ENCODE measurements at regions of chr13 and their contacts with region 1.

Region 1: GRCh38 chr13:97030705-97031452 is 36.6 kb upstream of the OXGR1 start:
- DNase-seq: peak; percentile 7 to 35 (median 17)
- ATAC-seq: peak; percentile 82
- H3K4me3 ChIP-seq: no peak overlapping the region
- H3K27ac ChIP-seq: no peak overlapping the region
- H3K4me1 ChIP-seq: no peaks in the 10 kb centered on the region
- H3K27me3 ChIP-seq: no peaks in the 10 kb centered on the region
- CTCF ChIP-seq: peak; percentile 1 to 54 (median 28); a peak in 4 of 6 replicates
- EP300 ChIP-seq: no peak
- POLR2A ChIP-seq: no peak
- RAD21 ChIP-seq: peak in 1 of 2 experiments; percentile 65; a peak in 3 of 4 replicates

Region 2: DNA sequence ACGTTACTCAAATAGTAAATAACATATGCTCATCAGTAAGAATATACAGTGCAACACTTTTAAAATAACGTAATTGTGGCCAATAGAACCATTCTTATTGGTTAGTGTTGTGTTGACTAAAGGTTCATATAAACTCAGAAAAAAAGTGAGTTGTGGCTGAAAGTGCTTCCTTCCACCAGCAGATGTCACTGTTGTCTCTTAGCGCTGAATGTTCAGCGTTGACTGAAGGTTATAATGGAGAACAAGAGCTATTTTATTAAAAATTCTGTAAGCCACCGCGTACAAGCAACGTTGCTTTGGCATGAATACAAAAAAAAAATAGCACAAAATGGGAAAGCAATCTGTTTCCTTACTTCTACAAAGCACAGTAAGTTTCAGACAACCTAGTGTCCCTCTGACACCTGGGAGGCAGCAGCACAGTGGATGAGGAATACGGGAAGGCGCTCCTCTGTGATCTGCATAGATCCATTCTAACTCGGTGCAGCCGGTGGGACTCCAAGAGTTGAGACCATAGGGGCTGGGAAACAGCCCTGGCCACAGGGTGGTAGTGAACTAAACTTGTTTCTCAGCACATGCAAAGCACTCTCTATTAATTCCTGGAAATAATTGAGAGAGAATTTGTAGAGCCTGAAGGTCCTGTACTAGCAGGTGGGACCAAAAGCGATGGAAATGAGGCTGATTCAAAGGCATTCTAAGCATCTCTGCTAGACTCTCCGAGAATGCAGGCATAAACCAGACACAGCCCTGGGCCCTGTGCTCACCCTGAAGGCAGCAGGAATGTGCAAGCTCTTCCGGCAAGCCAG is 12.6 kb before region 1 on chr13:
- CTCF ChIA-PET with region 1: interaction called, 8 read pairs
- POLR2A ChIA-PET with region 1: interaction called, 4 read pairs
- in situ Hi-C with region 1: no loop called
- intact Hi-C with region 1: loop called (anchors 1 kb)
- DNase-seq: peak; percentile 16 to 56 (median 22)
- ATAC-seq: peak; percentile 83
- H3K4me3 ChIP-seq: no peak overlapping the region
- H3K27ac ChIP-seq: no peak overlapping the region
- H3K4me1 ChIP-seq: no peaks in the 10 kb centered on the region
- H3K27me3 ChIP-seq: no peaks in the 10 kb centered on the region; a peak in 1 of 5 replicates
- CTCF ChIP-seq: peak; percentile 57 to 78 (median 72)
- EP300 ChIP-seq: no peak
- POLR2A ChIP-seq: no peak
- RAD21 ChIP-seq: peak; percentile 54 to 72

Region 3: GRCh38 chr13:97108532-97108905 is 77.6 kb after region 1 on chr13:
- CTCF ChIA-PET with region 1: no interaction called
- POLR2A ChIA-PET with region 1: no interaction called
- in situ Hi-C with region 1: no loop called
- intact Hi-C with region 1: no loop called
- DNase-seq: peak in 1 of 4 experiments; percentile 39
- ATAC-seq: no peak
- H3K4me3 ChIP-seq: no peak overlapping the region
- H3K27ac ChIP-seq: no peak overlapping the region
- H3K4me1 ChIP-seq: peaks cover 4 to 9% of the 10 kb centered on the region in 2 experiments; a peak in 3 of 5 replicates
- H3K27me3 ChIP-seq: no peaks in the 10 kb centered on the region
- CTCF ChIP-seq: no peak
- EP300 ChIP-seq: no peak
- POLR2A ChIP-seq: no peak
- RAD21 ChIP-seq: no peak

Region 4: DNA sequence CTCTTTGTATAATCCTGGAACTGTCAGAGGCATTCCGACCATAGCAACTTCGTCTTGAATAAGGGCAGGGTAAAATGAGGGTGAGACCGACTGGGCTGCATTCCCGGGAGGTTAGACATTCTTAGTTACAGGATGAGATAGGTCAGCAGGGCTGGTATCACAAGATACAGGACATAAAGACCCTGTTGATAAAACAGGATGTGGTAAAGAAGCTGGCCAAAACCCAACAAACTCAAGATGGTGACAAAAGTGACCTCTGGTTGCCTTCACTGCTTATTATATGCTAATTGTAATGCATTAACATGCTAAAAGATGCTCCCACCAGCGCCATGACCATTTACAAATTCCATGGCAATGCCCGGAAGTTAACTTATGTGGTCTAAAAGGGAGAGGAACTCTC is 163.6 kb after region 1 on chr13:
- CTCF ChIA-PET with region 1: no interaction called
- POLR2A ChIA-PET with region 1: no interaction called
- in situ Hi-C with region 1: no loop called
- intact Hi-C with region 1: no loop called
- DNase-seq: peak in 2 of 4 experiments; percentile 31 to 76
- ATAC-seq: peak; percentile 71
- H3K4me3 ChIP-seq: no peak overlapping the region
- H3K27ac ChIP-seq: peak overlapping the region; percentile 64
- H3K4me1 ChIP-seq: peaks cover 4 to 51% of the 10 kb centered on the region in 2 experiments; a peak in 4 of 5 replicates
- H3K27me3 ChIP-seq: no peaks in the 10 kb centered on the region
- CTCF ChIP-seq: no peak
- EP300 ChIP-seq: peak; percentile 85
- POLR2A ChIP-seq: no peak
- RAD21 ChIP-seq: no peak

Region 5: GRCh38 chr13:97212601-97213040 is 181.7 kb after region 1 on chr13:
- CTCF ChIA-PET with region 1: no interaction called
- POLR2A ChIA-PET with region 1: no interaction called
- in situ Hi-C with region 1: no loop called
- intact Hi-C with region 1: loop called (anchors 2 kb)
- DNase-seq: peak in 2 of 4 experiments; percentile 40 to 47
- ATAC-seq: peak; percentile 95
- H3K4me3 ChIP-seq: no peak overlapping the region
- H3K27ac ChIP-seq: no peak overlapping the region
- H3K4me1 ChIP-seq: no peaks in the 10 kb centered on the region; a peak in 1 of 5 replicates
- H3K27me3 ChIP-seq: no peaks in the 10 kb centered on the region
- CTCF ChIP-seq: peak; percentile 56 to 74 (median 61)
- EP300 ChIP-seq: no peak
- POLR2A ChIP-seq: no peak
- RAD21 ChIP-seq: peak; percentile 73 to 82

Region 6: DNA sequence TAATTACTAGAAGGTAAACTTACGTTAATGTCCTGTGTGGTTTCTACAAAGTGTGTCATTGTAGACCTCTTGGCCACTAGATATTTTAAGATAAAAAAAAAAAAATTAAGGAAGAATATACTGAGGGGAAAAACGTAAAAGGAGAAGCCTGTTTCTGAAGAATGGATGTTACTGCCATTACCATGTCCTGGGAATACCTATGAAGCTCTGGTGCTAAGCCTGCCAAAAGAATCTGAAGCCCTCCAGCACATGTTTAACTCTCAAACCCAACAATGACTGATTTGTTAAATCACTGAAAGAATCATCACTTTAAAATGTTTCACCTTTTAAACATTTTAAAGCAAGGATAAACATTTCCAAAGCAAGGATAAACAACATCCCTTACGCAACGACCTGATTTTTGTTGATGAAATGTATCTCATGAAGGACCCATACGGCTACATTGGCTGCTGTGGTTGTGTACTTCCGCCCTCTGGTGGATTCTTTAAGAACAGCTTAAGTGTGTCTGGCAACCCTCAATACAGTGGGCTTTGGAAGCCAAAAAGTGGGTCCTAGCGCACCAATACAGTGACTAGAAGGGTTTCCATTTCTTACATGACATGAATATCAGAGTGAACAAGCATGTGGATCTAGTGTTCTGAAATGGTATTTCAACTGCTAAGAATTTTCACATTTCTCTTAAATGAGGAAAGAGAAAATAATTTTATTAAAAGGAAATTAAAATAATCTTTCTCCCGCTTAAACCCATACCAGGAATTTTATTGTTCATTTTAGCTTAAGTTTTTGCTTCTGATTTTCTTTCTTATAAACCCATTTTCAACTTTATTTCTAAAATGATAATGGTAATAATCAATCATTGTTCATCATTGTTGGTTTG is 328.5 kb after region 1 on chr13:
- CTCF ChIA-PET with region 1: interaction called, 3 read pairs
- POLR2A ChIA-PET with region 1: no interaction called
- in situ Hi-C with region 1: no loop called
- intact Hi-C with region 1: loop called (anchors 5 kb)
- DNase-seq: peak; percentile 33 to 71 (median 42)
- ATAC-seq: peak; percentile 95
- H3K4me3 ChIP-seq: no peak overlapping the region
- H3K27ac ChIP-seq: no peak overlapping the region
- H3K4me1 ChIP-seq: no peaks in the 10 kb centered on the region
- H3K27me3 ChIP-seq: no peaks in the 10 kb centered on the region
- CTCF ChIP-seq: peak; percentile 59 to 65 (median 62)
- EP300 ChIP-seq: no peak
- POLR2A ChIP-seq: no peak
- RAD21 ChIP-seq: peak; percentile 63 to 74

Measured in K562 (cell line).